ENCODE measurements at regions of chr20 and their contacts with region 1.

Region 1: DNA sequence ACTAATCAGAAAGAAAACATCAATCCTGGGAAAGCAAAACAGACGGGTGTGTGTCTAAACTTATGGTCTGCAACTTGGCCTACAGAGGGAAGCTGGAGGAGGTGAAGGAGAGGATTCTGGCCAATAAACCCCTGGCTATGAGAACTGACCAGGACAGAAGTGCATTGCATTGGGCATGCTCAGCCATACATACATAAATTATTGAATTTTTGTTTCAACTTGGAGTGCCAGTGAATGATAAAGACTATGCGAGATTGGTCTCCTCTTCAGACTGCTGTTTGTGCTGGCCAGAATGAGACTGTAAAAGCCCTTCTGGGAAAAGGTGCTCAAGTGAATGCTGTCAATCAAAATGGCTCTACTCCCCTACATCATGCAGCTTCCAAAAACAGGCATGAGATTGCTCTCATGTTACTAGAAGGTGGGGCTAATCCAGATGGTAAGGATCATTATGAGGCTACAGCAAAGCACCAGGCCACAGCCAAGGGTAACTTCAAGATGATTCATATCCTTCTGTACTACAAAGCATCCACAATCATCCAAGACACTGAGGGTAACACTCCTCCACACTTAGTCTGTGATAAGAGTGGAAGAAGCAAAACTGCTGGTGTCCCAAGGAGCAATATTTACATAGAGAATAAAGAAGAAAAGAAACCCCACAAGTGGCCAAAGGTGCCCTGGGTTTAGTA is 17.4 kb downstream of the ADNP start:
- DNase-seq: peak; percentile 53
- H3K4me3 Mint-ChIP-seq: no peak overlapping the region
- H3K27ac Mint-ChIP-seq: peak overlapping the region; percentile 80
- H3K4me1 Mint-ChIP-seq: peaks cover 83% of the 10 kb centered on the region
- H3K27me3 Mint-ChIP-seq: no peaks in the 10 kb centered on the region

Region 2: GRCh38 chr20:50903353-50904051 is 10.3 kb before region 1 on chr20:
- CTCF ChIA-PET with region 1: interaction called, 4 read pairs
- intact Hi-C with region 1: loop called (anchors 1 kb)
- DNase-seq: no peak
- H3K4me3 Mint-ChIP-seq: no peak overlapping the region
- H3K27ac Mint-ChIP-seq: peak overlapping the region; percentile 53
- H3K4me1 Mint-ChIP-seq: peaks cover 33% of the 10 kb centered on the region
- H3K27me3 Mint-ChIP-seq: no peaks in the 10 kb centered on the region

Measured in activated naive CD4-positive, alpha-beta T cell treated with anti-CD3 and anti-CD28 coated beads for 36 hours (primary cell).